ENCODE measurements at regions of chr7 and their contacts with region 1.

Region 1: GRCh38 chr7:150448789-150449147 is 1.7 kb upstream of the GIMAP8 start:
- DNase-seq: peak; percentile 75 to 94 (median 89)
- ATAC-seq: peak; percentile 59
- H3K4me3 ChIP-seq: peak overlapping the region; percentile 9 to 32
- H3K4me3 Mint-ChIP-seq: peak overlapping the region; percentile 99
- H3K27ac ChIP-seq: peak overlapping the region; percentile 67 to 82
- H3K27ac Mint-ChIP-seq: peak overlapping the region; percentile 95
- H3K4me1 ChIP-seq: peaks cover 31% of the 10 kb centered on the region
- H3K4me1 Mint-ChIP-seq: peaks cover 58% of the 10 kb centered on the region
- H3K27me3 ChIP-seq: no peaks in the 10 kb centered on the region
- H3K27me3 Mint-ChIP-seq: no peaks in the 10 kb centered on the region
- CTCF ChIP-seq: peak; percentile 90

Region 2: DNA sequence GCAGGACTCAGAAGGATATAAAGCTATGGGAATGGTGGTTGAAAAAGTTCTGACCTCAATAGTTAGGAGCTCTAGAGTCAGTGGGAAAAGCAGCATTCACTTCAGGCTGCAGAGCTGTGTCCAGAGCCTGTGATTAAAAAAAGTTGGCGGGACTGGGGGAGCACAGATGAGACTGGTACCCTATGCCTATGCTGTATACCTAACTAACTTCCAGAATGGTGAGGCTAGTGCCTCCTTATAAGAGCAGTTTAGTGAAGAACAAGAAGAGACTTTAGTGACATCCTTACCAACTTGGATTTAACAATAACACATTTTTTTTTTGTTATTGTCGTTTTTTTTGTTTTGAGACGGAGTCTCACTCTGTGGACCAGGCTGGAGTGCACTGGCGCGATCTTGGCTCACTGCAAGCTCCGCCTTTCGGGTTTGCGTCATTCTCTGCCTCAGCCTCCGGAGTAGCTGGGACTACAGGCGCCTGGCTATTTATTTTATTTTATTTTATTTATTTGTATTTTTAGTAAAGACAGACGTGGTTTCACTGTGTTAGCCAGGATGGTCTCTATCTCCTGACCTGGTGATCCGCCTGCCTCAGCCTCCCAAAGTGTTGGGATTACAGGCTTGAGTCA is 1260.0 kb before region 1 on chr7:
- CTCF ChIA-PET with region 1: no interaction called
- POLR2A ChIA-PET with region 1: no interaction called
- intact Hi-C with region 1: no loop called
- DNase-seq: no peak
- ATAC-seq: no peak
- H3K4me3 ChIP-seq: no peak overlapping the region
- H3K4me3 Mint-ChIP-seq: no peak overlapping the region
- H3K27ac ChIP-seq: no peak overlapping the region
- H3K27ac Mint-ChIP-seq: no peak overlapping the region
- H3K4me1 ChIP-seq: no peaks in the 10 kb centered on the region
- H3K4me1 Mint-ChIP-seq: peaks cover 14% of the 10 kb centered on the region
- H3K27me3 ChIP-seq: no peaks in the 10 kb centered on the region
- H3K27me3 Mint-ChIP-seq: no peaks in the 10 kb centered on the region
- CTCF ChIP-seq: no peak

Region 3: DNA sequence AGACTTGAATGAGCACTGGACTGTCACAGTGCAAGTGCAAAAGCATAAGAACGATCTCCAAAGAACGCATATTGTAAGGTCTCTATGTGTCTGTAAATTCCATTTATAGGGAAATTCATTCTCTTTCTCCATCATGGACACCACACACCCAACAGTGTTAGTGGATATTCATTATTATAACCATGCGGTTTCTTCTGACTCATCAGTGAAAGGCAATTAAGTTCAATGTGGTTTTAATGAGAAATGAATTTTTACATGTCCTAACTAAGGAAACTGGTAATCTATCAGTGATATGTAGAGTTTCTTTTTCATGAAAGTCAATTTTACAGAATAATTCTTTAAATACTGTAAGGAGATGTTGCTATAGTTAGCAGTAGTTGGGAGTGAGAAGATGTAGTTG is 27.5 kb after region 1 on chr7:
- CTCF ChIA-PET with region 1: interaction called, 67 read pairs
- POLR2A ChIA-PET with region 1: interaction called, 103 read pairs
- intact Hi-C with region 1: loop called (anchors 2 kb)
- DNase-seq: no peak
- ATAC-seq: no peak
- H3K4me3 ChIP-seq: no peak overlapping the region
- H3K4me3 Mint-ChIP-seq: peak overlapping the region; percentile 1
- H3K27ac ChIP-seq: peak overlapping the region; percentile 55 to 91
- H3K27ac Mint-ChIP-seq: peak overlapping the region; percentile 100
- H3K4me1 ChIP-seq: peaks cover 64% of the 10 kb centered on the region
- H3K4me1 Mint-ChIP-seq: peaks cover 85% of the 10 kb centered on the region
- H3K27me3 ChIP-seq: no peaks in the 10 kb centered on the region
- H3K27me3 Mint-ChIP-seq: no peaks in the 10 kb centered on the region
- CTCF ChIP-seq: no peak

Region 4: DNA sequence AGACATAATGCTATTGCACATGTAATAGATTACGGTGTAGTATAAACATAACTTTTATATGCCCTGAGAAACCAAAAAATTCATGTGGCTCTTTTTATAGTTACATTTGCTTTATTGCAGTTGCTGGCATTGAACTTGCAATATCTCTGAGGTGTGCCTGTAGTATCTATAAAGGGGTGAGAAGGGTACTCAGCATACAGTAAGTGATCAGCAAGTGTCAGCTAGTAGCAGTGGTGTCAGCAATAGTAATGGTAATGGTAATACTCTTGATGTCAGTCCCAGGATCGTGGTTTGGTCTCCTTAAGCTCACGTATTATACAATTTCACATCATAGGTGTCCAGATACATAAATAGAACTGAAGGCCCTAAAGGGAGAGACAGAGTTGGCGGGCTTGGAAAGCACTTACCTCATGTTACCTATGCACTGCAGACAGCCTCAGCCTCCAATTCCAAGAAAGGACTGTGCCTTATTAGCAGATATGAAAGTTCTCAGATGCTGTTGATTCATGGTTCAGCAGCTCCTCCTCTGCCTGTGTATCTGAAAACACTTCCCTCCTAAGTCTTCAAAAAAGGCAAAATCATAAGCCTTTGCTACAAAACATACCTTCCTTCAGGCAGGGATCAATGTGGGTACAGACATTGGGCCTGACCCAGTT is 59.3 kb after region 1 on chr7:
- CTCF ChIA-PET with region 1: interaction called, 192 read pairs
- POLR2A ChIA-PET with region 1: interaction called, 483 read pairs
- intact Hi-C with region 1: no loop called
- DNase-seq: peak in 1 of 9 experiments; percentile 39
- ATAC-seq: peak; percentile 30
- H3K4me3 ChIP-seq: peak overlapping the region; percentile 11 to 12
- H3K4me3 Mint-ChIP-seq: peak overlapping the region; percentile 72
- H3K27ac ChIP-seq: peak overlapping the region; percentile 2 to 47
- H3K27ac Mint-ChIP-seq: peak overlapping the region; percentile 91
- H3K4me1 ChIP-seq: peaks cover 92% of the 10 kb centered on the region
- H3K4me1 Mint-ChIP-seq: peaks cover 92% of the 10 kb centered on the region
- H3K27me3 ChIP-seq: no peaks in the 10 kb centered on the region
- H3K27me3 Mint-ChIP-seq: no peaks in the 10 kb centered on the region
- CTCF ChIP-seq: no peak

Region 5: GRCh38 chr7:150567169-150567568 is 118.4 kb after region 1 on chr7 and contains the start of gene GIMAP4:
- CTCF ChIA-PET with region 1: interaction called, 74 read pairs
- POLR2A ChIA-PET with region 1: interaction called, 191 read pairs
- intact Hi-C with region 1: loop called (anchors 1 to 2 kb)
- DNase-seq: peak in 5 of 9 experiments; percentile 33 to 71 (median 50)
- ATAC-seq: peak; percentile 28
- H3K4me3 ChIP-seq: peak within 1 kb of the TSS; percentile 83 to 88
- H3K4me3 Mint-ChIP-seq: peak within 1 kb of the TSS; percentile 97
- H3K27ac ChIP-seq: peak within 1 kb of the TSS; percentile 73 to 74
- H3K27ac Mint-ChIP-seq: peak within 1 kb of the TSS; percentile 98
- H3K4me1 ChIP-seq: peaks cover 73% of the 10 kb centered on the region
- H3K4me1 Mint-ChIP-seq: peaks cover 78% of the 10 kb centered on the region
- H3K27me3 ChIP-seq: no peaks in the 10 kb centered on the region
- H3K27me3 Mint-ChIP-seq: no peaks in the 10 kb centered on the region
- CTCF ChIP-seq: no peak
- total RNA-seq, gene GIMAP4: 11.8 to 13.8 TPM

Region 6: GRCh38 chr7:150668472-150668911 is 219.7 kb after region 1 on chr7:
- CTCF ChIA-PET with region 1: interaction called, 4 read pairs
- POLR2A ChIA-PET with region 1: interaction called, 13 read pairs
- intact Hi-C with region 1: loop called in 1 of 2 experiments (anchors 1 kb)
- DNase-seq: peak in 6 of 9 experiments; percentile 60 to 94 (median 72)
- ATAC-seq: peak; percentile 76
- H3K4me3 ChIP-seq: peak overlapping the region in 1 of 2 experiments; percentile 17
- H3K4me3 Mint-ChIP-seq: peak overlapping the region; percentile 36
- H3K27ac ChIP-seq: peak overlapping the region; percentile 63 to 95
- H3K27ac Mint-ChIP-seq: peak overlapping the region; percentile 97
- H3K4me1 ChIP-seq: peaks cover 88% of the 10 kb centered on the region
- H3K4me1 Mint-ChIP-seq: peaks cover 90% of the 10 kb centered on the region
- H3K27me3 ChIP-seq: no peaks in the 10 kb centered on the region
- H3K27me3 Mint-ChIP-seq: no peaks in the 10 kb centered on the region
- CTCF ChIP-seq: no peak

Region 7: DNA sequence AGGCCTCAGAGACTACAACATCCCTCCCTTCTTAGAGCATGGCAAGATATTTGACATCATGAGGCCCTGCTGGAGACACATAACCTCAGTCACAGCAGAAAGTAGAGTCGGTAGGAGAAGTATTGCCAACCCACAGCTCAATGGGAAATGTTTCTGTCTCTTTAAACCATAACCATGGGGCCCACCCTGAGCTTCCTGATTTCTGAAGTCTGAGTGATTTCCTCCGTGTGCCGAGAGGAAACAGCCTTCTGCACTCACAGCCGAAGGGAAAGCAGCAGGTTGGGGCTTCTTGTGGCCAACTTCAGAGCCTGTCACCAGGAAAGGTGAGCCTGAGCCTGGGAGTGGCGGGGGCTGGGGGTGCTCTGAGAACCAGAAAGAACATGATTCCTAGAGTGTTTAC is 267.6 kb after region 1 on chr7 and contains the start of gene GIMAP1:
- CTCF ChIA-PET with region 1: interaction called, 30 read pairs
- POLR2A ChIA-PET with region 1: interaction called, 30 read pairs
- intact Hi-C with region 1: no loop called
- DNase-seq: peak in 8 of 9 experiments; percentile 59 to 85 (median 73)
- ATAC-seq: peak; percentile 84
- H3K4me3 ChIP-seq: peak within 1 kb of the TSS; percentile 90 to 91
- H3K4me3 Mint-ChIP-seq: peak within 1 kb of the TSS; percentile 95
- H3K27ac ChIP-seq: peak within 1 kb of the TSS; percentile 73 to 87
- H3K27ac Mint-ChIP-seq: peak within 1 kb of the TSS; percentile 96
- H3K4me1 ChIP-seq: peaks cover 50% of the 10 kb centered on the region
- H3K4me1 Mint-ChIP-seq: peaks cover 67% of the 10 kb centered on the region
- H3K27me3 ChIP-seq: no peaks in the 10 kb centered on the region
- H3K27me3 Mint-ChIP-seq: no peaks in the 10 kb centered on the region
- CTCF ChIP-seq: no peak
- total RNA-seq, gene GIMAP1: 6.1 to 6.2 TPM

Region 8: GRCh38 chr7:150876817-150877526 is 428.2 kb after region 1 on chr7:
- CTCF ChIA-PET with region 1: no interaction called
- POLR2A ChIA-PET with region 1: no interaction called
- intact Hi-C with region 1: loop called in 1 of 2 experiments (anchors 5 kb)
- DNase-seq: peak in 8 of 9 experiments; percentile 15 to 74 (median 52)
- ATAC-seq: peak; percentile 58
- H3K4me3 ChIP-seq: no peak overlapping the region
- H3K4me3 Mint-ChIP-seq: peak overlapping the region; percentile 19
- H3K27ac ChIP-seq: no peak overlapping the region
- H3K27ac Mint-ChIP-seq: peak overlapping the region; percentile 23
- H3K4me1 ChIP-seq: peaks cover 18% of the 10 kb centered on the region
- H3K4me1 Mint-ChIP-seq: peaks cover 16% of the 10 kb centered on the region
- H3K27me3 ChIP-seq: no peaks in the 10 kb centered on the region
- H3K27me3 Mint-ChIP-seq: peaks cover 6% of the 10 kb centered on the region
- CTCF ChIP-seq: no peak

Measured in CD8-positive, alpha-beta T cell (primary cell).